Lower leg skin (tissue), 4 donors: ENCODE measurements at regions of chr17 and their contacts with region 1.

Region 1: DNA sequence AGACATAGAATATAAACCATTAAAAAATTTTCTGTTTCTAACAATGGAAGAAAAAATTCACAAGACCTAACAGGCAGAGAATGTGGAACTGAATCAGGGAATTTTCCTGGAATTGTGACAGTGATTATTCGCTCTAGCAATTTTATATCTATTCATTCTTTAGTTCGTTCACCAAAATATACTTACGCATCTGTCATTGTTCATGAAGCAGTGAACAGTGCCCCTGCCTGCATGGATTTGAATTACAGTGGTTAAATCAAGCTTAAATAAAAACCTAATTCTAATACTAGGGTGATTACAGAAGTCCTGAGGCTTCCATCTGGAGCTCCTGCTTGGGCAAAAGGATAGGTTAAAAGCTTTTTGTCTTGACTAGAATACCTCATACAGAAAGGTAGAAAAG is 48.6 kb downstream of the ABCA8 start:
- DNase-seq: no peak
- H3K4me3 ChIP-seq: no peak overlapping the region
- CTCF ChIP-seq: no peak
- POLR2A ChIP-seq: no peak

Region 2: DNA sequence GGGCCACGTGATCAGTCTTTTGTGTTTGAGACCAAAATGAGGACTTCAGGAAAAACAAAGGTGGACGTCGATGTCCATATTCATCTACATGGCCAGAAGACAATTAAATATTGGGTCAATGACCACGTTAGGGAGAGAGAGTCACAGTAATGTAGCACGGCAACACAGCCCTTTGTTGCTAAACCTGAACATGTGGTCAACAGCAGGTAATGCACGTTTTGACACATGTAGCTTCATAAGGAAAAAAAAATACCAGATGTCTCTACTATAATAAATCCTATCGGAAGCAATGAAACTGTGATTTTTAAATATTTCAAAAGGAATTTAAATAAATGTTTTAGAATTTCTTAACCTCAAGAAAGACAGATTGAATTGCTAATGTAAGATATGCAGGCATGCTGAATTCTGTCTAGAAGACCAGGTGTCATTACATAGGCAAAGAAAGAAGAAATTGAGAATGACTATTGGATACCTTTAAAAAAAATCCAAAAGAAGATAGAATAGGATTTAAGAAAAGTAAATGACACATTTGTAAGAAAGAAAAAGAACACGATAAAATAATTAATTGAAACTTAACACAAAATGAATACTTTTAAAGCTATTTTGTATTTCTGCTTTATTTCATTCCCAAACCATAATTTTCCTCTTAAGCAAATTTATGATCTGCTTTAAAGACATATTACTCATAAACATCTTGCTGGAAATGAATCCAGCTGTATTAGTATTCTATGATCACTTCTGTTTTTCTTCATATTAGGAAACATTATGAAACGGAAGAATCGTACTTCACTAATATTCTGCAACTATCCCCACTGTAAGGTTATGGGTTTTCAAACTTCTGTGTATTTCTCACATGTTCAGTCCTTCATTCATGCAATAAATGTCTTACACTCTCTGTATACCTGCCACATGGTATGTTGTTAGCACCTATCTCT is 18.4 kb after region 1 on chr17:
- intact Hi-C with region 1: loop called (anchors 1 kb)
- DNase-seq: no peak
- H3K4me3 ChIP-seq: no peak overlapping the region
- CTCF ChIP-seq: no peak
- POLR2A ChIP-seq: no peak